Right ventricle myocardium superior (tissue), 1 donor: ENCODE measurements at regions of chr3 and their contacts with region 1.

Region 1: DNA sequence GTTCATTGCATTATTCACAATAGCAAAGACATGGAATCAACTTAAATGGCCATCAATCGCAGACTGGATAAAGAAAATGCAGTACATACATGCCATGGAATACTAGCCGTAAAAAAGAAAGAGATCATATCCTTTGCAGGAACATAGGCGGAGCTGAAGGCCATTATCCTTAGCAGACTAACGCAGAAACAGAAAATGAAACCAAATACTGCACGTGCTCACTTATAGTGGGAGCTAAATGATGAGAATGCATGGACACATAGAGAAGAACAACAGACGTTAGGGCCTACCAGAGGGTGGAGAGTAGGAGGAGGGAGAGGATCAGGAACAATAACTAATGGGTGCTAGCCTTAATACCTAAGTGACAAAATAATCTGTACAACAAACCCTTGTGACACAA is 57.9 kb downstream of the RASA2 start:
- DNase-seq: no peak
- ATAC-seq: no peak

Region 2: GRCh38 chr3:141477224-141477623 is 67.5 kb before region 1 on chr3:
- intact Hi-C with region 1: loop called (anchors 5 kb)
- DNase-seq: no peak
- ATAC-seq: no peak